Astrocyte of the cerebellum (primary cell): ENCODE measurements at regions of chr1 and their contacts with region 1.

Region 1: DNA sequence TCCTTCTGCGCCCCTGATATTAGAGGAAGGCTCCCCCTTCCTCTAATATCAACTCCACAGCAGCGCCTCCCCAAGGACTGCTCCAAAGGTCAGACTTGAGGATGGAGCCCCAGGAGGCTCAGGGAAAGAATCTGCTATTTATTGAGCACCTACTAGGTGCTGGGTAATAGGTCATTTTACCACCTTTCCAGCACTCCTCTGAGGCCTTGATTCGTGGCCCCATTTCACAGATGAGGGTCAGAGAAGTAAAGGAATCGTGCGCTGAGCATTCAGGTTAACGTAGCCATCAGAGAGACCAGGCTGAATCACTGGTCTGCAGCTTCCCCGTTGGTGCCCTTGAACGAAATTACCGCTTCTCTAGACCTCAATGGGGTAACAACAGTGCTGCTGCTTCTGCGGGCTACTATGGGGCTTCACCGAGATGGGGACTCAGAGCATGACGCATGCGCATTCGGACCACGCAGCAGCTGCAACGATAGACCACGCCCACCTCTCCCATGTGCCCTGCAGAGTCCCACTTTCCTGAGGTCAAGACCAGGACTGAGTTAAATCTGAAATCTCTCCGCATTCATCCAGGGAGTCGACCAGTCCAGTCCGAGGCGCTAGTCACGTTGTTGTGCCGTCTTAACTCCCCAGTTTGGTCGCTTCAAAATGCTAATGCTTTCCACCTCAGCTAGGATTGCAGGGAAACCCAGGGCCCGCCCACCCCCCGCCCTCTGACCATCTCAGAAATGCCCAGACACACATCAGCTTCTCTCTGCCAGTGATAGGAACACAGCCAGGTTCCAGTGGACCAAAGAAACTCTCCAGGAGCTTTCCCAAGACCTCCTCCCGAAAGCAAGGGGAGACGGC is 12.9 kb downstream of the CAMK2N1 start:
- DNase-seq: no peak
- H3K4me3 ChIP-seq: no peak overlapping the region
- CTCF ChIP-seq: no peak

Region 2: DNA sequence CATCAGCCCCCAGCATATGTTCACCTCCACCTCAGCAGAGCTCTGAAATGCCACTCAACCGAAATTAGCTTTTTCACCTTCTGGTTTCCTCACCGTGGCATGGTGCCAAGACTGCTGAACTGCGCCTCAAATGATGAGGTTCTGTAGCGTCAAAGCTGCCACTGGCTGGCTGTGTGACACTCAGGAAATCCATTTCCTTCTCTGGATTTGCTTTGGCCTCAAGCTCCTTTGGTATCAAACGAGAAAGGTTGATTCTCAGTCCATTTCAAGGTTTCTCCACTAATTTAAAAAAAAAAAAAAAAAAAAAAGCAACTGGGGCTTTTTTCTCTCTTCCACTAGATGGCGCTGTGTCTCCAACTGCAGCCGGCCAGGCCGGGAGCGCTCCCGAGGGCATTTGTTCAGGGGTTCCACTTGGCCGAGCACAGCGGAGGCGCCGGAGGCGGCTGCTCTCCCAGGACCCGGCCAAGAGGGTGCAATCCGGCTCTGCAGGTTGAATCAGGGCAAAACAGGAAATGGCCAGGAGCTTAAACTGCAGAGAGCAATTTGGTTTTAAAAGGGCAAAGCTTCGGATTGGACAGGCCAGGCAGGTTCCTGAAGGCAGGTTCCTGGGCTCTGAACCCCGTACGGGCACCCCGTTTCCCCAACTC is 260.3 kb before region 1 on chr1:
- in situ Hi-C with region 1: loop called (anchors 10 kb)
- DNase-seq: peak; percentile 13
- H3K4me3 ChIP-seq: no peak overlapping the region
- CTCF ChIP-seq: peak; percentile 82

Region 3: GRCh38 chr1:20416706-20417105 is 56.4 kb before region 1 on chr1:
- in situ Hi-C with region 1: no loop called
- DNase-seq: no peak
- H3K4me3 ChIP-seq: no peak overlapping the region
- CTCF ChIP-seq: no peak

Region 4: DNA sequence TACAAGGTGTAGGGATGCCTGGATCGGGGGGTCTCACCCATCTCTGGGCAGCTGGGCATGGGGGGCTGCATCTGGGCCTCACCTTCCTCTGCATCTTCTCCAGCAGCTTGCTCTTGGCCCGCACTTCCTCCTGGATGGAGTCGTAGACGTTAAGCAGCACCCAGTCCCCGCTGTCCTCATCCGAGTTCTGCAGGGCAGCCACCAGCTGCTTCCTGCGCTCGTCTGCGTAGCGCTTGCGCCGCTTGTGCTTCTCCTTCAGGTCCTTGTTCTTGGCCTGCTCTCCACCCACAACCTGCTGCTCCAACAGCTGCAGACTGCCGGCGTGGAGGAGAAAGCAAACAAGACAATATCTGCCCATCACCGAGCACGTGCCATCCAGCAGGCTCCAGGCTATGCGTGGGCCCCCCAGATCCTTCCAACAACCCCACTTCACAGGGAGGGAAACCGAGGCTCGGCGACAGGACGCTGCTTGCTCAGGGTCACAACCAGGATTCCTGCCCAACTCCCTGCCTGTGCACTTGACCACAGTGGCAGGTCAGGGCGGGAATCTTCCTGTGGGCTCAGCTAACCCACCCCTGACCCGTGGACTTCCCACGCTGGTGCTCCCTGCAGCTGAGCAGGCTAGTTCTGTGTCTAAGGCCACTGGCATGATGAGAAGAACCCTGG is 209.6 kb after region 1 on chr1:
- in situ Hi-C with region 1: no loop called
- DNase-seq: no peak
- H3K4me3 ChIP-seq: no peak overlapping the region
- CTCF ChIP-seq: no peak